Thyroid gland (tissue), 4 donors: ENCODE measurements at regions of chr3 and their contacts with region 1.

Region 1: DNA sequence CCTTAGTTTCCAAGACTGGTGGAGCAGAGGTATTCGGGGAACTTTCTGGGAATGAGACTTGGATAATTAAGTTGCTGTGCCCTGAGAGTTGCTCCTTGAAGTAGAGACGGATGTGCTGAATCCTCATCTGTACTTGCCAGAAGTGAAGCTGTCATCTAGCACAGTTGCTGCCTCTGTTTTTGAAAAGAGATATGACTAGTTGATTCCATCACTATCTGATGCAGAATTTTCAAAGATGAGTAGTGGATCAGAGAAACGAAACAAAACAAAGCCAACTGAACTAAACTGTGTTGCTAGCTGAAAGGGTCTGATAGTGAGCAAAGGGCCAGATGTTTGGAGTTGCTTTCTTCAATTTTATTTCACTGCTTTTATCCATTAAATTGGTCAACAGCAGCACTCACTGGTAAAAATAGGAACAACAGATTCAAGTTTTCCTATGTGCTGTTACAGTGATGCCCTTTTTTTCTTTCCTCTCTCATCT is 52.7 kb downstream of the MITF start:
- DNase-seq: no peak
- H3K4me3 ChIP-seq: no peak overlapping the region
- H3K27ac ChIP-seq: peak overlapping the region in 2 of 3 donors; percentile 41 to 48
- H3K4me1 ChIP-seq: peaks cover 24 to 33% of the 10 kb centered on the region in 2 donors
- H3K27me3 ChIP-seq: no peaks in the 10 kb centered on the region
- CTCF ChIP-seq: peak in 3 of 6 experiments; percentile 47 to 69 (median 64)
- POLR2A ChIP-seq: no peak

Region 2: DNA sequence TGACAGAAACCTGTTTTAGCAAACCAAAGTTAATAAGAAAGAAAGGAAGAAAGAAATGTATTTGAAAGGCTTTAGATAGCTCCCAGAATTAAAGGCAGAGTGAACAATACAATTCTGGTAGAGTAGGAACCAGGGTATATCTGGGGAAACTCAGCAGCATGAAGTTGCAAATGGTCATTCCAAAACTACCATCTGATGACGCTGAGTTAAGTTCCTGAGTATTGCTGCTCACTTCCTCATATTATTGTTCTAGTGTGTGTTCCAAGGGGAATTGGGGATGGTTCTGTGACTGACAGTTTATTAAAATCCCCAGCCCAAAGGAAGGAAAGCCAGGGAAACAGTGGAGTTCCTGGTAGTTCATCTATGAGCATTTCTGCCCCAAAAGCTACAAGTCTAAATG is 317.8 kb before region 1 on chr3:
- intact Hi-C with region 1: no loop called
- DNase-seq: no peak
- H3K4me3 ChIP-seq: no peak overlapping the region
- H3K27ac ChIP-seq: peak overlapping the region in 1 of 3 donors; percentile 13
- H3K4me1 ChIP-seq: peaks cover 21 to 26% of the 10 kb centered on the region in 2 donors
- H3K27me3 ChIP-seq: no peaks in the 10 kb centered on the region
- CTCF ChIP-seq: no peak
- POLR2A ChIP-seq: no peak

Region 3: GRCh38 chr3:69646287-69647067 is 145.5 kb before region 1 on chr3:
- intact Hi-C with region 1: no loop called
- DNase-seq: no peak
- H3K4me3 ChIP-seq: no peak overlapping the region
- H3K27ac ChIP-seq: no peak overlapping the region
- H3K4me1 ChIP-seq: peaks cover 0 to 7% of the 10 kb centered on the region in 2 donors
- H3K27me3 ChIP-seq: no peaks in the 10 kb centered on the region
- CTCF ChIP-seq: no peak
- POLR2A ChIP-seq: no peak

Region 4: DNA sequence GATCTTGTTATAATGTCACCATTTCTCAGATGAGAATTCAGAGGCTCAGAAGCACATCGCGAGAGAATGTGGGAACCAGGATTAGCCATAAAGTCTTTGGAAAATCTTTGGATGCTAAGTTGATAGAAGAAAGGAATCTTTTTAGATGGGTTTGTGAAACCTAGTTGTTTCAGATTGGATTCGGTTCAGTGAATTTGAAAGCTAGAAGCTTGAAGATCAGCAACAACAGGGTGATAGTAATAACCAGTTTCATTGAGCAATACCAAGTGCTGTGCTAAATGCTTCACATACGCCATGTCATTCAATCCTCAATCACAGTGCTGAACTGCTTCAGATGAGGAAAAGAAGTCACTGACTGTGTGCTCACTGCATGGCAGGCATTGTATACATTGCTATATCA is 100.1 kb before region 1 on chr3:
- intact Hi-C with region 1: loop called (anchors 5 kb)
- DNase-seq: no peak
- H3K4me3 ChIP-seq: no peak overlapping the region
- H3K27ac ChIP-seq: no peak overlapping the region
- H3K4me1 ChIP-seq: no peaks in the 10 kb centered on the region
- H3K27me3 ChIP-seq: no peaks in the 10 kb centered on the region
- CTCF ChIP-seq: no peak
- POLR2A ChIP-seq: no peak